Left ventricle myocardium superior (tissue), 1 donor: ENCODE measurements at regions of chr9 and their contacts with region 1.

Region 1: GRCh38 chr9:73023025-73023541 is 70.2 kb upstream of the ALDH1A1 start:
- DNase-seq: peak; percentile 33
- ATAC-seq: peak; percentile 65

Region 2: GRCh38 chr9:72856972-72857623 is 166.0 kb before region 1 on chr9:
- intact Hi-C with region 1: loop called (anchors 5 kb)
- DNase-seq: no peak
- ATAC-seq: peak; percentile 79

Region 3: GRCh38 chr9:72871685-72872084 is 151.4 kb before region 1 on chr9:
- intact Hi-C with region 1: loop called (anchors 5 kb)
- DNase-seq: no peak
- ATAC-seq: no peak

Region 4: DNA sequence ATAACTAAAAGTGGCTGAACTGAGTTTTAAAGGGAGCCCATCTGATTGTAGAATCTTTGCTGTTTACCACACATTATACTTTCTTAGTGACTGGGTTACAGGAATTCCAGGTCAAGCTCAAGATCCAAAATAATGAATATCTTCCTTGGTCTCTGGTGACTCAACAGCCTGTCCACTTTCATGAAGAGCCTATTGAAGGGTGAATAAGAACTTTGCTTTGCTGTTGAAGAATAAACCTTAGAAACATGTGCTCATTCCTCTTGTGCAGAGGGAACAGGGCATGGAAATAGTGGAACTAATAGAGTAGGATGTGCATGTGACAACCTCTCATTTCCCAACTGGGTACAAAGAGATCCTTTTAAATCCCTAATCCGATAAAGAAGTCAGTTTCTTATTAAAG is 91.6 kb before region 1 on chr9:
- intact Hi-C with region 1: no loop called
- DNase-seq: no peak
- ATAC-seq: no peak

Region 5: GRCh38 chr9:73230251-73230650 is 207.2 kb after region 1 on chr9:
- intact Hi-C with region 1: no loop called
- DNase-seq: no peak
- ATAC-seq: no peak